ENCODE measurements at regions of chr9 and their contacts with region 1.

Region 1: DNA sequence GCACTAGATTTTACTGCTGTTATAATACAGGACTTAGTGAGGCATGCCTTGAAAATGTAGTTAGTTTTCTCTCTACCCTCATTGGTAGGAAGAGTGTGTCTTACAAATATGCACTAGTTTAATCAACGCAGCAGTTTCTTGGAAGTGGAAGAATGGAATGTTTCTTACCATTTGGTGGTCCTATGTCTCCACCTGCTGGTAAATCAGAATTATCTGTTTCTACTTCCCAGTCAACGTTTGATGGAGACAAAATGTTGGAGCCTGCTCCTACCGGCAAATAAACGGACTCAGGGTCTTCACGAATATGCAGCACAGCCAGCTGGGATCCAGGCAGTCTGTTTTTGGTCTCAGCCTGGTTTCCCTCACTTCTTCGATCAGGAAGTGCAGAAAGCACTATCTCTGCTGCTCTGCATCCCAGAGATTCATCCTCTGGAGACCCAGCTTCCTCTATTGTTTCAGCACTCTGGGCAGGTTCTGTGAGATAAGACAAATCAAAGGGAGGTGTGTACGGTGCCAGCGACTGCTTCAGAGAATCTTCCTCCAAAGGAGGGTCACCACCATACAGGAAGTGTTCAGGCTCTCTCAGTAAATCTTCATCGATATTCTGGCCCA is 59.5 kb upstream of the PCA3 start:
- DNase-seq: peak; percentile 42
- CTCF ChIP-seq: peak; percentile 59

Region 2: GRCh38 chr9:76166526-76166925 is 538.2 kb before region 1 on chr9:
- CTCF ChIA-PET with region 1: no interaction called
- POLR2A ChIA-PET with region 1: no interaction called
- DNase-seq: no peak
- CTCF ChIP-seq: no peak

Region 3: DNA sequence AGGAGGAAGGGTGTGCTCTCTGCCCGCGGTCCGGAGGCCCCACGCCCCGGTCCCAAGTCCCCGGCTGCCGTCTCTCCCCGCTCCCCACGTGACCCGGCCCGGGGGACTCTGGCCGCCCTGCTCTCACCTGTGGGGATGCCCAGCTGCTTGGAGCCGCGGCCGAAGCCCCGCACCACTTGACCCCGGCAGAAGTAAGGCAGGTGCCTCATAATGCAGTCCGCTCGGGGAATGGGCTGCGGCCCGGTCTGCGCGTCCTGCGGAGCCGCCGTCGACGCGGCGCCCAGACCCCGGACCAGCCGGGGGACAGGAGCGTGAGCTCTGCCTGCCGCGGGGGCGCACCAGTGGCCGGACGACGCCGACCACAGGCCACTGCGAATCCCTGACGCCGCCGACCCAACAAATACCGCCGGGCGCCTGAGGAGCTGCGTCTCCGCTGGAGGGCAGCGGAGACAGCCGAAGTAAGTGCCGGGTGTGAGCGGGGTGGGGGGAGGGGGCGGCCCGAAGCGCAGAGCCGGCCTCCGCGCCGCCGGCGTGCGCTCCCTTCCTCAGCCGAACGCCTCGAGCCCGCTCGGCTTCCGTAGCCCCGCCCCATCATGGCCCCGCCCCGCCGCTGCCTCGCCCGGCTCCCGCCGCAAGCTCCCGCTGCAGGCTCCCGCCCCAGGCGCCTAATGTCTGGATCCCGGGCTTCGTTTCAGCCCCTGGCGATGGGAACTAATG is 310.6 kb before region 1 on chr9 and contains the start of gene RFK:
- CTCF ChIA-PET with region 1: interaction called, 24 read pairs
- POLR2A ChIA-PET with region 1: no interaction called
- DNase-seq: peak; percentile 95
- CTCF ChIP-seq: peak; percentile 67

Region 4: DNA sequence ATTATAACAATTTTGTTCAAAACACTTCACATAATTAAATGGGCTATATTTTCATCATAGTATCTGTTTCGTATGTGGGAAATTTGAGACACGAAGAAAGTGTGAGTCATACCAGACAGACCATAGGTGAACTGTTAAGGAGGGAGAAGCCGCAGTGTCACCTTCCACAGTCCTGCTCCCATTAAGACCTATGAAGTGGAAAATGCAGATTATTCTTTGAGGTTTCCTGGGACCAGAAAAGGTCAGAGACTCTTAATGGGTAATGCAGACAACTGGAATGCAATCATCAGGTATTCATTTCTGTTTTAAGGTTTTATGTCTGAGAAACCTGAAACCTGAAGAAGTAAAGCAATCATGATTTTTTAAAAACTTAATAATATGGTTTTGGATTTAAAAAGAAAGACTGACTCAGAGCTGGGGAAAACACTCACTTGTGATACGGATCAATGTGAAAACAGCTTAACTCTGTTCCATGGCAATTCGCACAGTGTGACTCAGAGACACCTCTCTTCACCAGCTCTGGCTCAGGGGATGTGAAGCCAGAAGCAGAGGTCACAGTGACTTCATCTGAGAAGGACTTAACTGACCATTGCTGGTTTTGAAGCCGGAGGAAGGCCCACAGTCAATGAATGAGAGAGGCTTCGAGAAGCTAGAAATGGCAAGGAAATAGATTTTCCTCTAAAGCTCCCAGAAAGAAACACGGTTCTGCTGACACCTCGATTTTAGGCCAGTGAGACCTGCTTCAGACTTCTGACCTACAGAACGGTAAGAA is 263.0 kb before region 1 on chr9:
- CTCF ChIA-PET with region 1: interaction called, 25 read pairs
- POLR2A ChIA-PET with region 1: interaction called, 4 read pairs
- DNase-seq: peak; percentile 32
- CTCF ChIP-seq: no peak

Region 5: DNA sequence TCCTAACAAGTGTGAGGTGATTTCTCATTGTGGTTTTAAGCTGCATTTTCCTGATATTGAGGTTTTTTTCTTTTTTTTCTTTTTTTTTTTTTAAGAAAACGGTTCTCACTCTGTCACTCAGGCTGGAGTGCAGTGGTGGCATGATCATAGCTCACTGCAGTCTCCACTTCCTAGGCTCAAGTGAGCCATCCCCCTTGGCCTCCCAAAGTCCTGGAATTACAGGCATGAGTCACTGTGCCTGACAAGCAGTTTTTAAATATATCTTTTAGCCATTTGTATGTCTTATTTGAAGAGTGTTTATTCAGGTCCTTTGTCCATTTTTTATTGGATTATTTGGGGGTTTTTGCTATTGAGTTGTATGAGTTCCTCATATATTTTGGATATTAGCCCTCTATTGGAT is 191.9 kb before region 1 on chr9:
- CTCF ChIA-PET with region 1: no interaction called
- POLR2A ChIA-PET with region 1: no interaction called
- DNase-seq: no peak
- CTCF ChIP-seq: no peak

Region 6: GRCh38 chr9:76658535-76659231 is 46.0 kb before region 1 on chr9:
- CTCF ChIA-PET with region 1: interaction called, 13 read pairs
- POLR2A ChIA-PET with region 1: interaction called, 3 read pairs
- DNase-seq: peak; percentile 64
- CTCF ChIP-seq: peak; percentile 70

Region 7: GRCh38 chr9:76687861-76688391 is 16.8 kb before region 1 on chr9:
- CTCF ChIA-PET with region 1: interaction called, 53 read pairs
- POLR2A ChIA-PET with region 1: no interaction called
- DNase-seq: no peak
- CTCF ChIP-seq: no peak